ENCODE measurements at regions of chr15 and their contacts with region 1.

Region 1: GRCh38 chr15:78149068-78149804 is at the start of gene IDH3A:
- DNase-seq: peak; percentile 99
- ATAC-seq: peak; percentile 97
- H3K4me3 ChIP-seq: peak within 1 kb of the TSS; percentile 63 to 93 (median 81)
- H3K4me3 Mint-ChIP-seq: peak within 1 kb of the TSS; percentile 98
- H3K27ac ChIP-seq: peak within 1 kb of the TSS; percentile 32 to 81
- H3K27ac Mint-ChIP-seq: peak within 1 kb of the TSS; percentile 93
- H3K4me1 ChIP-seq: peaks cover 20 to 25% of the 10 kb centered on the region in 2 donors
- H3K4me1 Mint-ChIP-seq: peaks cover 41% of the 10 kb centered on the region
- H3K27me3 ChIP-seq: no peaks in the 10 kb centered on the region
- H3K27me3 Mint-ChIP-seq: no peaks in the 10 kb centered on the region
- CTCF ChIP-seq: no peak
- total RNA-seq, gene IDH3A: 64.5 and 71.7 TPM in 2 replicates

Region 2: DNA sequence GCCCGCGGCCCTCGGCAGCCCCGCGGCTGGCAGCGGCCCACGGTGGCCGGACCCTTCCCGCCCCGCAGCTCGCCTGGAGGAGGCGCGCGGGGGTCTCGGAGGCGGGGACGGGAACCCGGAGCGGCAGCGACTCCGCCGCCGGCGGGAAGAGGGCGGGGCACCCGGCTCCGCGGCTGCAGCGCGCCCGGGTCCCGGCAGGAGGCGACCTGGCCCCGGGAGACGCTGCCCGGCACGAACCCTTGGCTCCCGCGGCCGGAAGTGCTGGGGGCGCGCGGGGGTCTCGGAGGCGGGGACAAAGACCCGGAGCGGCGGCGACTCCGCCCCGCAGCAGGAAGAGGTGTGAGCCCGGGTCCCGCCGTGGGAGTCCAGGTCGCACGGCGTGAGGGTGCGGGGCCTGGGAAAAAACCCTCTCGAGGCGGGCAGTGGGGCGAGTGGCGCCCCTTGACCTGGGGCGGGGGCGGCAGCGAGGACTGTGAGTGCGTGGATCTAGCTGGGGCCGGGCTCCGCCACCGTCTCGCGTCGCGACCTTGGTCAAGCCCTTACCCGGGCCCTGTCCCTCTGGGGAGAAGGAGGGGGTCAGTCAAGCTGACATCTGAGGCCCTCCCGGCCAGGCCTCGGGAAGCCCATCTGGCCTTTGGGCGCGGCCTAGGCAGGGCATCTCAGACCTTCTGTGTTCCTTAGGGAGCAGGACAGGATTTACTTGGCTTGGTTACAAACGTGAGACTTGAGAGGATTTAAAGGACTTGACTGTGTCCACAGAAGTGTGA is 17.8 kb before region 1 on chr15 and contains the start of gene CIB2:
- CTCF ChIA-PET with region 1: interaction called, 13 read pairs
- POLR2A ChIA-PET with region 1: no interaction called
- intact Hi-C with region 1: loop called (anchors 1 kb)
- DNase-seq: peak; percentile 86
- ATAC-seq: peak; percentile 94
- H3K4me3 ChIP-seq: peak within 1 kb of the TSS; percentile 43 to 77 (median 72)
- H3K4me3 Mint-ChIP-seq: peak within 1 kb of the TSS; percentile 89
- H3K27ac ChIP-seq: peak within 1 kb of the TSS; percentile 69 to 86
- H3K27ac Mint-ChIP-seq: peak within 1 kb of the TSS; percentile 88
- H3K4me1 ChIP-seq: peaks cover 12 to 14% of the 10 kb centered on the region in 2 donors
- H3K4me1 Mint-ChIP-seq: peaks cover 14% of the 10 kb centered on the region
- H3K27me3 ChIP-seq: no peaks in the 10 kb centered on the region
- H3K27me3 Mint-ChIP-seq: no peaks in the 10 kb centered on the region
- CTCF ChIP-seq: peak; percentile 83
- total RNA-seq, gene CIB2: 3.2 and 3.8 TPM in 2 replicates

Measured in B cell (primary cell).